MCF 10A (cell line): ENCODE measurements at regions of chr5 and their contacts with region 1.

Region 1: DNA sequence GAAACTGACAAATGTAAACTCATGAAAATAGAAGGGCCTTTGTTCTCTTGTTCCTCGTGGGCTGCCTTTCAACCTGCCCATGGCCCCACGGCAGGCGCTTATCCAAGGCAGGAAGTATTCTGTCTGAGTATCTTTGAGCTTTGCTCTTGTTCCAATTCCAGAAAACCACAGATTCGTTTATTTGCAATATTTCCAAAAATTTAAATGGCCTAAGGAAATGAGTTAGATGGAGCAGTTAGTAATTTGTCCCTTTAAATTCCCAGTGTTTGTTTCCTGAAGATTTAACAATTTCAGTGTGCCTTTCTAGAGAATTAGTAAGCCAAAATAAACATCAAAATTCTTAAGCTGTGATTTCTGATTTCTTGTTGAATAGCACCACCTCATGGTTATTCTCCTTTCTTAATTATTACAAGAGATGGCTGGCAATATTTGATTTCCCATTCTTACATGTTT is 299.4 kb upstream of the RASA1 start:
- DNase-seq: peak; percentile 44
- H3K4me3 Mint-ChIP-seq: no peak overlapping the region
- H3K27ac Mint-ChIP-seq: no peak overlapping the region
- H3K4me1 Mint-ChIP-seq: peaks cover 11% of the 10 kb centered on the region
- H3K27me3 Mint-ChIP-seq: peaks cover 54% of the 10 kb centered on the region
- CTCF ChIP-seq: peak; percentile 43

Region 2: DNA sequence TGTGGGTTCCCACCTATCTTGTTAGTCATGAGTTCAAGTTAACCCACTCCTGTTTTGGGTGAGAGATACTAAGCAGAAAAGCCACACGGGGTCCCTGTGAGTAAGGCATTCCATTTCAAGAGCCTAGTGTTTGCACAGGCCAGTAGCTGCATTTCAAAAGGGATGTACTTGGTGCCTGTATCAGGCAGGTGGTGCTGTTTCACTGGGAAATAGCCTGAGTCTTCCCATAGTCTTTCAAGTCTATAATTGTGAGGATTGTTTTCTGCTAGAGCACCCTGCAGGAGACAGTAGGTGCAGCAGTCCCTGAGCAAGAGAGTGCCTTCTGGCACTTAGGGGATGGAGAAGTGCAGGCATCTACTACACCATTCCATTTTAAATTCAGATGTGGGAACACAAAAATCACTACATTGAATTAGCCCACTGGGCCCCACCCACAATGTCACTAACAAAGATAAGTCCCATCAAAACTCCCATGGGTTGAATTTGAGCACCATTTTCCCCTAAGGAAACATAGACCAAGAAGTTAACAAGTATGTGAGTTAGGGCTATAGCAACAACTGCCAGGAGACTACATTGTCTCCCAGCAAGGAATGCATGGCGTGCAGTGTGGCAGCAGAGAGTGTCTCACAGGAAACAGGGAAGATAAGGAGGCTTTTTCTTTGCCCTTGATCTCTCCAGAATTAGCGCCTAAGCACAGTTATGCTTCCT is 87.4 kb before region 1 on chr5:
- CTCF ChIA-PET with region 1: interaction called, 23 read pairs
- POLR2A ChIA-PET with region 1: interaction called, 3 read pairs
- intact Hi-C with region 1: loop called (anchors 1 kb)
- DNase-seq: peak; percentile 71
- H3K4me3 Mint-ChIP-seq: no peak overlapping the region
- H3K27ac Mint-ChIP-seq: no peak overlapping the region
- H3K4me1 Mint-ChIP-seq: no peaks in the 10 kb centered on the region
- H3K27me3 Mint-ChIP-seq: peaks cover 74% of the 10 kb centered on the region
- CTCF ChIP-seq: peak; percentile 64

Region 3: GRCh38 chr5:87008751-87009560 is 40.6 kb after region 1 on chr5:
- CTCF ChIA-PET with region 1: interaction called, 15 read pairs
- POLR2A ChIA-PET with region 1: no interaction called
- intact Hi-C with region 1: loop called (anchors 1 kb)
- DNase-seq: no peak
- H3K4me3 Mint-ChIP-seq: no peak overlapping the region
- H3K27ac Mint-ChIP-seq: no peak overlapping the region
- H3K4me1 Mint-ChIP-seq: peaks cover 5% of the 10 kb centered on the region
- H3K27me3 Mint-ChIP-seq: peaks cover 53% of the 10 kb centered on the region
- CTCF ChIP-seq: no peak

Region 4: GRCh38 chr5:87400305-87400899 is 432.1 kb after region 1 on chr5:
- CTCF ChIA-PET with region 1: interaction called, 3 read pairs
- POLR2A ChIA-PET with region 1: no interaction called
- intact Hi-C with region 1: loop called (anchors 1 kb)
- DNase-seq: peak; percentile 46
- H3K4me3 Mint-ChIP-seq: no peak overlapping the region
- H3K27ac Mint-ChIP-seq: no peak overlapping the region
- H3K4me1 Mint-ChIP-seq: peaks cover 2% of the 10 kb centered on the region
- H3K27me3 Mint-ChIP-seq: no peaks in the 10 kb centered on the region
- CTCF ChIP-seq: peak; percentile 54